PC-9 (cell line): ENCODE measurements at regions of chr13 and their contacts with region 1.

Region 1: GRCh38 chr13:65154661-65155447 is 2075.3 kb downstream of the PCDH9 start:
- DNase-seq: no peak
- H3K4me3 ChIP-seq: no peak overlapping the region
- H3K27ac ChIP-seq: no peak overlapping the region
- H3K4me1 ChIP-seq: no peaks in the 10 kb centered on the region
- H3K27me3 ChIP-seq: no peaks in the 10 kb centered on the region
- CTCF ChIP-seq: no peak

Region 2: DNA sequence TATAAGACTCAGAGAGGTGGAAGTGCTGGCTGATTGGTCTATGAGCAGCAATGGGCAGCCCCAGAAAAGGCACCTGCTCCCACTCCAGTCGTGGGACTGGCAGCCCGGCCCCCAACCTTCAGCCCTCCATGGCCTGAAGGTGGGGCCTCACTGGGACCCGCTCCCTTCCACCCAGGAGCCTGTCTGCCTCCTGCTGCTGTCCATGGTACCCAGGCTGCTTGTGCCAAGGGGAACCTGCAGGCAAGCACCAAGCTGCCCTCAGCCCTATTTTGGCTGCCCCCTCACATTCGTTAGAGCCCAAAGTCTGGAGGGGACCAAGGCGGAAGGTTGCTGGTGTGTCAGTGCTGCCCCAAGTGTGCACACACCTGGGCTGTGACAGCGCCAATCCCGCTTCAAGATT is 229.6 kb before region 1 on chr13:
- CTCF ChIA-PET with region 1: no interaction called
- POLR2A ChIA-PET with region 1: no interaction called
- intact Hi-C with region 1: no loop called
- DNase-seq: no peak
- H3K4me3 ChIP-seq: no peak overlapping the region
- H3K27ac ChIP-seq: no peak overlapping the region
- H3K4me1 ChIP-seq: peaks cover 13% of the 10 kb centered on the region; the same call in 1 of the 2 replicates
- H3K27me3 ChIP-seq: no peaks in the 10 kb centered on the region
- CTCF ChIP-seq: no peak

Region 3: GRCh38 chr13:65095161-65096082 is 59.4 kb before region 1 on chr13:
- CTCF ChIA-PET with region 1: no interaction called
- POLR2A ChIA-PET with region 1: no interaction called
- intact Hi-C with region 1: no loop called
- DNase-seq: no peak
- H3K4me3 ChIP-seq: no peak overlapping the region
- H3K27ac ChIP-seq: no peak overlapping the region
- H3K4me1 ChIP-seq: no peaks in the 10 kb centered on the region
- H3K27me3 ChIP-seq: no peaks in the 10 kb centered on the region
- CTCF ChIP-seq: no peak

Region 4: GRCh38 chr13:65168026-65168425 is 13.2 kb after region 1 on chr13:
- CTCF ChIA-PET with region 1: no interaction called
- POLR2A ChIA-PET with region 1: interaction called, 20 read pairs
- intact Hi-C with region 1: no loop called
- DNase-seq: no peak
- H3K4me3 ChIP-seq: no peak overlapping the region
- H3K27ac ChIP-seq: no peak overlapping the region
- H3K4me1 ChIP-seq: no peaks in the 10 kb centered on the region
- H3K27me3 ChIP-seq: no peaks in the 10 kb centered on the region
- CTCF ChIP-seq: no peak